ENCODE measurements at regions of chr6 and their contacts with region 1.

Region 1: DNA sequence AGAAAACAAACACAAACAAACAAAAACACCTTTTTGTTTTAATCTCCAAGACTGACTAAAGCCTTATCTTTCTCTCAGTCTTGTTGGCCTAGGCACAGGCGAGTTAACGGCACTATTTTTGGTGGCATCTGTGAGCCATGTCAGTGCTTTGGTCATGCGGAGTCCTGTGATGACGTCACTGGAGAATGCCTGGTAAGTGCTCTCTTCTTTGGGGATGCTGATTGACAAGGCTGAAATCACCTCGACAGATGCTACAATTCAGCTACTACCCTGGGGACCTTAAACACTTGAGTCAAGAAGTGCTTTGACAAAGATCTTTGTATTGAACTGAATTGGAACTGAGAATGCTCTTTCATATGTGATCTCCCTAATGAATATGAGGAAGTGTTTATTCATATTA is 384.1 kb downstream of the LAMA2 start:
- DNase-seq: no peak
- ATAC-seq: no peak
- H3K4me3 Mint-ChIP-seq: no peak overlapping the region
- H3K27ac Mint-ChIP-seq: no peak overlapping the region
- H3K4me1 Mint-ChIP-seq: no peaks in the 10 kb centered on the region
- H3K27me3 Mint-ChIP-seq: peaks cover 13% of the 10 kb centered on the region

Region 2: DNA sequence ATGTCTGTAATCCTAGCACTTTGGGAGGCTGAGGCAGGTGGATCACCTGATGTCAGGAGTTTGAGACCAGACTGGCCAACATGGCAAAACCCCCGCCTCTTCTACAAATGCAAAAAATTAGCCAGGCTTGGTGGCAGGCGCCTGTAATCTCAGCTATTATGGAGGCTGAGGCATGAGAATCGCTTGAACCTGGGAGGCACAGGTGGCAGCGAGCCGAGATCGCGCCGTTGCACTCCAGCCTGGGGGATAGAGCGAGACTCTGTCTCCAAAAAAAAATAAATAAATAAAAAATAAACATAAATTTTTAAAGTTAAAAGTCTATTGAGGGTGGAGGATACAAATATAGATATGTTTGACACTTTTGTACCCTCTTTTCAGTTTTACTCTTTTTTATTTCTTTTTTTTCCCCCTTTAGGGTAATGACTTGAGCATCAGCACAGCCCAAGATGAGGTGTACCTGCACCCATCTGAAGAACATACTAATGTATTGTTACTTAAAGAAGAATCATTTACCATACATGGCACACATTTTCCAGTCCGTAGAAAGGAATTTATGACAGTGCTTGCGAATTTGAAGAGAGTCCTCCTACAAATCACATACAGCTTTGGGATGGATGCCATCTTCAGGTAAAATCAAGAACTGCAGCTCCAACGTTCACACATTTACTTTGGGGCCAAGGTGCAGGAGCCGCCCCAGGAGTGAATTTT is 15.2 kb before region 1 on chr6:
- CTCF ChIA-PET with region 1: interaction called, 11 read pairs
- DNase-seq: peak; percentile 61
- ATAC-seq: peak; percentile 76
- H3K4me3 Mint-ChIP-seq: no peak overlapping the region
- H3K27ac Mint-ChIP-seq: no peak overlapping the region
- H3K4me1 Mint-ChIP-seq: peaks cover 4% of the 10 kb centered on the region
- H3K27me3 Mint-ChIP-seq: peaks cover 50% of the 10 kb centered on the region